GM12878 (cell line): ENCODE measurements at regions of chr21 and their contacts with region 1.

Region 1: GRCh38 chr21:34745557-34746255 is 76.9 kb downstream of the CLIC6 start:
- DNase-seq: peak; percentile 26
- ATAC-seq: peak; percentile 95
- H3K4me3 ChIP-seq: peak overlapping the region; percentile 38; the same call in 1 of the 2 replicates
- H3K27ac ChIP-seq: 0 out of 2 replicates have a peak overlapping the region, but pooled peaks have one; percentile 18
- H3K4me1 ChIP-seq: peaks cover 8% of the 10 kb centered on the region
- H3K27me3 ChIP-seq: no peaks in the 10 kb centered on the region; a peak in 2 of 4 replicates
- CTCF ChIP-seq: peak; percentile 81 to 91 (median 85)
- EP300 ChIP-seq: no peak
- POLR2A ChIP-seq: no peak
- RAD21 ChIP-seq: peak; percentile 92

Region 2: DNA sequence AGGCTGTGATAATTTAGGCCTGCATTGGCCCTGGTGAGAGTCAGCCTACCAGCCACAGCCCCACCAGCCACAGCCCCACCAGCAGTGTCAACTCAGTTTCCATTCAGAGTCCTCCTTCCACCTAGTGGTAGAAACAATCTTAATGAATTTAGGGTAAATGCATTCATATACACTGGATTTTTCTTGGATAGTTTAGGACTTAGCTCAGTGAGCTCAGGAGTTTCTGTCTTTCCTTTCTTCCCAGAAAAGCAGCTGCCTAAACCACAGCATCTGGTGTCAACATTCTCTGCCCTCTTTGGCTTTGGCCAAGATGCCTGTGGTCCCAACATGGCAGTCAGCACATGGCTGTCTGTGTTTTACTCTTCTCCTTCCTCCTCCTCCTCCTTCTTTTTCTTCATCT is 17.1 kb after region 1 on chr21:
- CTCF ChIA-PET with region 1: interaction called, 14 read pairs
- POLR2A ChIA-PET with region 1: no interaction called
- RAD21 ChIA-PET with region 1: interaction called, 7 read pairs
- SMC1A ChIA-PET with region 1: no interaction called
- in situ Hi-C with region 1: no loop called
- intact Hi-C with region 1: no loop called
- DNase-seq: no peak
- ATAC-seq: no peak
- H3K4me3 ChIP-seq: no peak overlapping the region
- H3K27ac ChIP-seq: no peak overlapping the region
- H3K4me1 ChIP-seq: no peaks in the 10 kb centered on the region
- H3K27me3 ChIP-seq: 0 out of 4 replicates have a peak, but pooled peaks cover 0 to 2% of the 10 kb centered on the region in 2 experiments
- CTCF ChIP-seq: no peak
- EP300 ChIP-seq: no peak
- POLR2A ChIP-seq: no peak
- RAD21 ChIP-seq: no peak

Region 3: DNA sequence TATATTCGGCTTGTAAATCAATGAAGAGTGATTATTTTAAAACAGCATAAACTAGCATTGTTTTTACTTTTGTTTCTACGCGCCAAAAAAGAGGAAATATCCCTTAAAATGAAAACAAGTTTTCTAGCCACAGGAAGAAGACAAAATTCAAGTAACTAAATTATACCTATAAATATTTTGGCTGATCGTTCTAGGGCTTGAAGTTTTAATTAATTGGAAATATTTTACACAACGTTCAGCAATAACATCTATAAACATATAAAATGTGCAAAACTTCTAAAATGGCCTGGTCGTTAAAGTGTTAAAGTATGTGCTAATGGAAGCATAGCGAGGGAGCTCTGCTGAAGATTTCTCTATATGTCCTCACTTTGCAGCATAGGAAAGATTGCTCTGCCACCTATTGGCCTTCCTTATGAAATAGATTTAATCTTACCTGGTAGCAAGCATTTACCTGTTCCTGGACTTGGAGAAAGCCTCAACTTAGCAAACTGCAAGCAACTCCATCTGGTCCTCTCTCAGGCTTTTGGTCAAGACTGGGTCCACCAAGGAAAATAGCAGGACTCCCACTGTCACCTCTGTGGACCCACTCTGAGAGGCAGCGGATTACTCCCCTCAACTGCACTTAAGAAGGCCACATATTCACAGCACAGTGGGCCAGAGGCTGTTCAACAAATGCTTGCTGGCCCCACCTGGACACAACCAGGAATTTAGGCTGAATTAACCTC is 654.7 kb after region 1 on chr21:
- CTCF ChIA-PET with region 1: interaction called, 21 read pairs
- POLR2A ChIA-PET with region 1: no interaction called
- RAD21 ChIA-PET with region 1: interaction called, 8 read pairs
- SMC1A ChIA-PET with region 1: interaction called, 5 read pairs
- in situ Hi-C with region 1: loop called (anchors 10 kb)
- intact Hi-C with region 1: loop called (anchors 2 kb)
- DNase-seq: peak; percentile 19
- ATAC-seq: peak; percentile 71
- H3K4me3 ChIP-seq: no peak overlapping the region
- H3K27ac ChIP-seq: no peak overlapping the region
- H3K4me1 ChIP-seq: no peaks in the 10 kb centered on the region
- H3K27me3 ChIP-seq: peaks cover 0 to 3% of the 10 kb centered on the region in 2 experiments; a peak in 3 of 4 replicates
- CTCF ChIP-seq: peak; percentile 35 to 72 (median 53); a peak in 5 of 6 replicates
- EP300 ChIP-seq: no peak
- POLR2A ChIP-seq: no peak
- RAD21 ChIP-seq: peak; percentile 92

Region 4: DNA sequence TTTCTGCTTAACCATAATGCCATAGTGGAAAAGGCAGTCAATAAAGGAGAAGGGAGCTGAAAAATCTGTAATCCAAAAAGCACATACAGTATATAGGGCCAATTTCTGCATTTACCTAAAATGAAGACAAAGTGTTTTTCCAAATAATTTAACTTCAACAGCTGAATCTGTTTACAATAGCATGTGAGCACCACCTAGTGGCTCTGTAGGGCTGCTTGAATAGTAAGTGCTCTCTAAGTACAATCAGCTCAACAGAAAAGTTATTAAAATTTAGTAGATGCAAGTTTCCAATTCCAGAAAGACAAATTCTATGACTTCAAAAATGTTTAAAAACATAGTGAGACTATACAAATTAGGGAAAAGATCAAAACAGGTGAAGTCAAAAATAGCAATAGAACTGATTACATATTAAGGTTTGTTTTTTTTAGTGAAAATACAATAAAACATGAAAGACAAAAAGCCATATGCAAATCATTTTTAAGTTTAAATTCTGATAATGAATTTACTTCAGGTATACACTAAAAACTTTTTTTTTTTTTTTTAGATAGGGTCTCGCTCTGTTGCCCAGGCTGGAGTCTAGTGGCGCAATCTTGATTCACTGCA is 1094.6 kb after region 1 on chr21:
- CTCF ChIA-PET with region 1: interaction called, 36 read pairs
- POLR2A ChIA-PET with region 1: no interaction called
- RAD21 ChIA-PET with region 1: interaction called, 16 read pairs
- SMC1A ChIA-PET with region 1: interaction called, 13 read pairs
- in situ Hi-C with region 1: loop called (anchors 5 kb)
- intact Hi-C with region 1: loop called (anchors 1 kb)
- DNase-seq: no peak
- ATAC-seq: peak; percentile 76
- H3K4me3 ChIP-seq: no peak overlapping the region
- H3K27ac ChIP-seq: no peak overlapping the region
- H3K4me1 ChIP-seq: no peaks in the 10 kb centered on the region
- H3K27me3 ChIP-seq: peaks cover 0 to 1% of the 10 kb centered on the region in 2 experiments; a peak in 1 of 4 replicates
- CTCF ChIP-seq: peak; percentile 73 to 76 (median 74)
- EP300 ChIP-seq: no peak
- POLR2A ChIP-seq: no peak
- RAD21 ChIP-seq: peak; percentile 87

Region 5: GRCh38 chr21:36028127-36029069 is 1282.7 kb after region 1 on chr21:
- CTCF ChIA-PET with region 1: interaction called, 16 read pairs
- POLR2A ChIA-PET with region 1: no interaction called
- RAD21 ChIA-PET with region 1: interaction called, 4 read pairs
- SMC1A ChIA-PET with region 1: interaction called, 6 read pairs
- in situ Hi-C with region 1: loop called (anchors 10 kb)
- intact Hi-C with region 1: loop called (anchors 5 kb)
- DNase-seq: peak; percentile 23
- ATAC-seq: peak; percentile 97
- H3K4me3 ChIP-seq: no peak overlapping the region
- H3K27ac ChIP-seq: no peak overlapping the region
- H3K4me1 ChIP-seq: peaks cover 5% of the 10 kb centered on the region
- H3K27me3 ChIP-seq: no peaks in the 10 kb centered on the region
- CTCF ChIP-seq: peak; percentile 94 to 98 (median 97)
- EP300 ChIP-seq: no peak
- POLR2A ChIP-seq: no peak
- RAD21 ChIP-seq: peak; percentile 95